ENCODE measurements at regions of chr16 and their contacts with region 1.

Region 1: DNA sequence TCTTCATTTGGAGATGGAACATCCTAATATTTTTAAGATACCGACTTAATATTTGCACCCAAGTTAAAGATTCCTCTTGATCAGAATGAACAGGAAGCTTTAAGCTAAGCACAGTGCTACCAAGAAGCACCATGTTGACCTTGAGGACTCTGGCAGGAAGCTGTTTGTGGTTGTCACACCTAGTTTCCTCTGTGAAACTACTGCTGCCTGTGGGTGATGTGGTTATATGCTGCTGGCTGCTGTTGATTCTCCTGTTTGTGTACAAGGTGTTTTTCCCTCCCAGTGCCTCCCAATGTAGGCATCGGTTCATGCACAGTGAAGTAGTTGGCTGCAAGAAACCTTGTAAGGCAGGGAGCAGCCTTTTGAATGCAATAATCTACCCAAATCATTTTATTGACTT is 23.4 kb downstream of the RBL2 start:
- DNase-seq: peak; percentile 46 to 96 (median 76)
- ATAC-seq: peak; percentile 70
- H3K4me3 ChIP-seq: peak overlapping the region; percentile 42 to 49
- H3K4me3 Mint-ChIP-seq: peak overlapping the region; percentile 76
- H3K27ac ChIP-seq: peak overlapping the region; percentile 65 to 72
- H3K27ac Mint-ChIP-seq: peak overlapping the region; percentile 94
- H3K4me1 ChIP-seq: peaks cover 90% of the 10 kb centered on the region
- H3K4me1 Mint-ChIP-seq: peaks cover 92% of the 10 kb centered on the region
- H3K27me3 ChIP-seq: no peaks in the 10 kb centered on the region
- H3K27me3 Mint-ChIP-seq: no peaks in the 10 kb centered on the region
- CTCF ChIP-seq: no peak

Region 2: GRCh38 chr16:53154513-53154912 is 303.2 kb before region 1 on chr16:
- CTCF ChIA-PET with region 1: no interaction called
- POLR2A ChIA-PET with region 1: no interaction called
- intact Hi-C with region 1: no loop called
- DNase-seq: no peak
- ATAC-seq: no peak
- H3K4me3 ChIP-seq: no peak overlapping the region
- H3K4me3 Mint-ChIP-seq: no peak overlapping the region
- H3K27ac ChIP-seq: no peak overlapping the region
- H3K27ac Mint-ChIP-seq: no peak overlapping the region
- H3K4me1 ChIP-seq: no peaks in the 10 kb centered on the region
- H3K4me1 Mint-ChIP-seq: peaks cover 2% of the 10 kb centered on the region
- H3K27me3 ChIP-seq: no peaks in the 10 kb centered on the region
- H3K27me3 Mint-ChIP-seq: no peaks in the 10 kb centered on the region
- CTCF ChIP-seq: no peak

Region 3: GRCh38 chr16:53304334-53304733 is 153.3 kb before region 1 on chr16:
- CTCF ChIA-PET with region 1: no interaction called
- POLR2A ChIA-PET with region 1: no interaction called
- intact Hi-C with region 1: no loop called
- DNase-seq: no peak
- ATAC-seq: no peak
- H3K4me3 ChIP-seq: no peak overlapping the region
- H3K4me3 Mint-ChIP-seq: no peak overlapping the region
- H3K27ac ChIP-seq: no peak overlapping the region
- H3K27ac Mint-ChIP-seq: no peak overlapping the region
- H3K4me1 ChIP-seq: no peaks in the 10 kb centered on the region
- H3K4me1 Mint-ChIP-seq: no peaks in the 10 kb centered on the region
- H3K27me3 ChIP-seq: no peaks in the 10 kb centered on the region
- H3K27me3 Mint-ChIP-seq: no peaks in the 10 kb centered on the region
- CTCF ChIP-seq: no peak

Region 4: GRCh38 chr16:53372992-53373871 is 84.4 kb before region 1 on chr16:
- CTCF ChIA-PET with region 1: no interaction called
- POLR2A ChIA-PET with region 1: interaction called, 4 read pairs
- intact Hi-C with region 1: loop called in 1 of 2 experiments (anchors 1 kb)
- DNase-seq: peak; percentile 60 to 88 (median 77)
- ATAC-seq: peak; percentile 96
- H3K4me3 ChIP-seq: peak overlapping the region; percentile 54 to 84
- H3K4me3 Mint-ChIP-seq: no peak overlapping the region
- H3K27ac ChIP-seq: peak overlapping the region in 1 of 2 experiments; percentile 35
- H3K27ac Mint-ChIP-seq: peak overlapping the region; percentile 78
- H3K4me1 ChIP-seq: peaks cover 7% of the 10 kb centered on the region
- H3K4me1 Mint-ChIP-seq: peaks cover 33% of the 10 kb centered on the region
- H3K27me3 ChIP-seq: peaks cover 0 to 3% of the 10 kb centered on the region in 2 experiments
- H3K27me3 Mint-ChIP-seq: peaks cover 6% of the 10 kb centered on the region
- CTCF ChIP-seq: no peak

Region 5: GRCh38 chr16:53482123-53482522 is 24.5 kb after region 1 on chr16:
- CTCF ChIA-PET with region 1: interaction called, 3 read pairs
- POLR2A ChIA-PET with region 1: interaction called, 13 read pairs
- intact Hi-C with region 1: loop called in 1 of 2 experiments (anchors 2 kb)
- DNase-seq: no peak
- ATAC-seq: no peak
- H3K4me3 ChIP-seq: no peak overlapping the region
- H3K4me3 Mint-ChIP-seq: no peak overlapping the region
- H3K27ac ChIP-seq: peak overlapping the region in 1 of 2 experiments; percentile 12
- H3K27ac Mint-ChIP-seq: peak overlapping the region; percentile 73
- H3K4me1 ChIP-seq: peaks cover 12% of the 10 kb centered on the region
- H3K4me1 Mint-ChIP-seq: peaks cover 45% of the 10 kb centered on the region
- H3K27me3 ChIP-seq: no peaks in the 10 kb centered on the region
- H3K27me3 Mint-ChIP-seq: no peaks in the 10 kb centered on the region
- CTCF ChIP-seq: no peak

Region 6: DNA sequence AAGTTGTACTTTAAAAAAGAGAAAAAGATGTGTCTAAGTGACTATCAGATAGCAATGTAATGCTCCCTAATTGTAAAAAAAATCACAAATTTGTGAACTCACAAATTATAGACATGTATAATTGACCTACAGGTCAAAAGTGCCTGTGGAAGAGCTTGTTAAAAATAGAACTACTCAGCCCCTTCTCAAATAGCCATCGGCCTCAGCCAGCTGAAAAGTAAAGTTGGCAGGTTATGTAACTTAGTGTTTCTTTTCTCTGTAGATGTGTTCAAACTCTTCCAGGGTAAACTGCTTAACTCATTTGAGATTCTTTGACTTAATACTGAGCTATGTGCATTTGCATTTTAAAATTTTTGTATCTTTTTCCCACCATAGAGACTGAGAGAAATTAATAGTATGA is 32.1 kb after region 1 on chr16:
- CTCF ChIA-PET with region 1: no interaction called
- POLR2A ChIA-PET with region 1: interaction called, 18 read pairs
- intact Hi-C with region 1: no loop called
- DNase-seq: no peak
- ATAC-seq: no peak
- H3K4me3 ChIP-seq: no peak overlapping the region
- H3K4me3 Mint-ChIP-seq: no peak overlapping the region
- H3K27ac ChIP-seq: no peak overlapping the region
- H3K27ac Mint-ChIP-seq: peak overlapping the region; percentile 62
- H3K4me1 ChIP-seq: peaks cover 17% of the 10 kb centered on the region
- H3K4me1 Mint-ChIP-seq: peaks cover 66% of the 10 kb centered on the region
- H3K27me3 ChIP-seq: no peaks in the 10 kb centered on the region
- H3K27me3 Mint-ChIP-seq: no peaks in the 10 kb centered on the region
- CTCF ChIP-seq: no peak

Measured in CD8-positive, alpha-beta T cell (primary cell).